A549 (cell line): ENCODE measurements at regions of chr11 and their contacts with region 1.

Region 1: DNA sequence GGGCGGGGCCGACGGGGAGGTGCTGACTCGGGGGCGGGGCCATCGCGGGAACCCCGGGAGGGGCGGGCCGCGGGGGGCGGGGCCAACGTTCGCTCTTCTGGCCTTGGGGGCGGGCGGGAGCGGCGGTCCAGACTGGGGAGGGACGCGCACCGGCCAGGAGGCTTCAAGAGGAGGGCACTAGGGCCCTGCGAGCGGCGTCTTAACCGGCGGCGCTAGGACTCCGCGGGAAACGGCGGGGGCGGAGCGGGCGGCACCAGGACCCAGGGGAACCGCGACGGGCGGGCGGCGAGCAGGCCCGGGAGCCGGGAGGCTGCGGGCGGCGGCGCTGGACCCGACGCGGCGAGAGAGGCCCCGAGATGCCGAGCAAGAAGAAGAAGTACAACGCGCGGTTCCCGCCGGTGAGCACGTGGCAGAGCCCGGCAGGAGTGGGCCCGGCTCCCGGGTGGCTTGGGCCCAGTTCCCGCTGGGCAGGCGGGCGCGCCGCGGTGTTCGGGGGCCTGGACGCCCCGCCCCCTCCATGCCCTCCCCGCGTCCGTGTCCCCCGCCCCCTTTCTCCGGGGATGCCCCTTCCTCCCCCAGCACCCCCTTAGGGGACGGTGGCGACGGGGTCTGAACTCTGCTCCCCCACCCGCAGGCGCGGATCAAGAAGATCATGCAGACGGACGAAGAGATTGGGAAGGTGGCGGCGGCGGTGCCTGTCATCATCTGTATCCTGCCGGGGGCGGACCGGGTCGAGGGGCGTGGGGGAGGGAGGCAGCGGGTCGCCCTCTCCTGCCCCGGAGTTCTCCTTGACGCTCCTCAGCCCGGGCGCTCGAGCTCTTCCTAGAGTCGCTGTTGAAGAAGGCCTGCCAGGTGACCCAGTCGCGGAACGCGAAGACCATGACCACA is at the start of gene DRAP1:
- DNase-seq: peak; percentile 86 to 99
- ATAC-seq: peak; percentile 65 to 81
- H3K4me3 ChIP-seq: peak within 1 kb of the TSS; percentile 97
- H3K27ac ChIP-seq: peak within 1 kb of the TSS; percentile 95 to 100
- H3K4me1 ChIP-seq: peaks cover 49% of the 10 kb centered on the region
- CTCF ChIP-seq: no peak
- EP300 ChIP-seq: peak in 1 of 2 experiments; percentile 31; a peak in 1 of 5 replicates
- POLR2A ChIP-seq: peak; percentile 50
- RAD21 ChIP-seq: peak; percentile 18 to 40; a peak in 2 of 5 replicates
- polyA plus RNA-seq, gene DRAP1: 27.8 and 73.7 TPM in 2 replicates

Region 2: DNA sequence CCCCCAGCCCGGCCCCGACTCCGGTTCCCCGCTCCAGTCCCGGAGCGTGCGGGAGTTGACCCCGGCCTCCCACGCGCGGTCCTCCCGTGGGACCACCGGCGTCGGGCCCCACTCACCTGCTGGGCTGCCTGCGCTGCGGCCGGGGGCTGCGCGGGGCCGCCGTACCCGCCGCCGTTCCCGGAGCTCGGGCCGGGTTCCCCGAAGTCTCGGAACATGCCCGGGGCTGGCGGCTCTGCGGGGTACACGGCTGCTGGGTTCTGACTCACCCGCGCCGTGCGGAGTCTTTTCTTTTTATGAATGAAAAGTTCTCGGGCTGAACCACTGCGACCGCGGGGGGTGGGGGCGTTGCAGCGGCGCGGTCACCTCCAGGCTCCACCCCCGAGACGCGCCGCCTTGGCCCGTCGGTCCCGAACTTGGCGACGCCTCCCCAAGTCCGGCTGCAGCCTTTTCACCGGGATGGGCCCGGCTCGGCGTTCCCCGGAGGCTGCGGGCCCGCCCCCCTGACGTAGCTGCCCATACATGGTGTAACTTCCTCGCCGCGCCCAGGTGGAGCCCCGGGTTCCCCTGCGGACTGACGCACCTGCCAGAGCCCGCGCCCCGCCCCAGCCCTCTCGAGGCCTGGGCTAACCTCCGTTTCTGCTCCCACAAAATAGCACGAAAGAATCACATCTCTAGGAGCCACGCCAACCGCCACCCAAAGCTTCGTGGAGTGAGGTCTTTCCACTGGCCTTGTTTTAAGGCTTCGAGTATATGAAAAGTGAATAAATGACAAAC is 19.1 kb before region 1 on chr11 and contains the start of gene FOSL1:
- CTCF ChIA-PET with region 1: interaction called, 618 read pairs
- POLR2A ChIA-PET with region 1: interaction called, 43 read pairs
- DNase-seq: peak; percentile 91 to 99
- ATAC-seq: peak; percentile 74 to 79
- H3K4me3 ChIP-seq: peak within 1 kb of the TSS; percentile 93
- H3K27ac ChIP-seq: peak within 1 kb of the TSS; percentile 97
- H3K4me1 ChIP-seq: peaks cover 59% of the 10 kb centered on the region
- CTCF ChIP-seq: no peak
- EP300 ChIP-seq: no peak
- POLR2A ChIP-seq: peak; percentile 78
- RAD21 ChIP-seq: no peak; a peak in 1 of 5 replicates
- polyA plus RNA-seq, gene FOSL1: 6.7 and 9.6 TPM in 2 replicates

Region 3: GRCh38 chr11:65906602-65907001 is 12.8 kb before region 1 on chr11:
- CTCF ChIA-PET with region 1: interaction called, 618 read pairs
- POLR2A ChIA-PET with region 1: interaction called, 43 read pairs
- DNase-seq: no peak
- ATAC-seq: no peak
- H3K4me3 ChIP-seq: no peak overlapping the region
- H3K27ac ChIP-seq: no peak overlapping the region
- H3K4me1 ChIP-seq: peaks cover 39% of the 10 kb centered on the region
- CTCF ChIP-seq: no peak
- EP300 ChIP-seq: no peak
- POLR2A ChIP-seq: no peak
- RAD21 ChIP-seq: no peak

Region 4: DNA sequence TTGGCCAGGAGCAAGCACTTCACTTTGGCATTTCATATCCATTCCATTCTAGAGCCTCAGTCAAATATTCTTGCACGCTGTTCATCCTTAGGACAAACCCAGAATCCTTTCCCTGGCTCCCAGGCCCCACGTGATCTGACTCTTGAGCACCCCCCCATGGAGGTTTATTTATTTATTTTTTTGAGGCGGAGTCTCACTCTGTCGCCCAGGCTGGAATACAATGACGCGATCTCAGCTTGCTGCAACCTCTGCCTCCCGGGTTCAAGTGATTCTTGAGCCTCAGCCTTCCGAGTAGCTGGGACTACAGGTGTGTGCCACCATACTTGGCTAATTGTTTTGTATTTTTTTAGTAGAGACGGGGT is 13.1 kb after region 1 on chr11:
- CTCF ChIA-PET with region 1: interaction called, 15 read pairs
- POLR2A ChIA-PET with region 1: no interaction called
- DNase-seq: peak; percentile 47 to 50
- ATAC-seq: peak; percentile 56 to 85; a peak in 4 of 6 replicates
- H3K4me3 ChIP-seq: no peak overlapping the region
- H3K27ac ChIP-seq: peak overlapping the region in 1 of 2 experiments; percentile 44; a peak in 2 of 6 replicates
- H3K4me1 ChIP-seq: peaks cover 9% of the 10 kb centered on the region; the same call in 1 of the 3 replicates
- CTCF ChIP-seq: peak; percentile 6; the same call in 1 of the 3 replicates
- EP300 ChIP-seq: no peak
- POLR2A ChIP-seq: no peak
- RAD21 ChIP-seq: no peak